IMR-90 (cell line): ENCODE measurements at regions of chr1 and their contacts with region 1.

Region 1: GRCh38 chr1:94237291-94238226 is at the start of gene ARHGAP29:
- DNase-seq: peak; percentile 50
- ATAC-seq: peak; percentile 96
- H3K4me3 ChIP-seq: peak within 1 kb of the TSS; percentile 60
- H3K27ac ChIP-seq: peak within 1 kb of the TSS; percentile 27
- H3K4me1 ChIP-seq: peaks cover 1% of the 10 kb centered on the region; the same call in 1 of the 2 replicates
- H3K27me3 ChIP-seq: no peaks in the 10 kb centered on the region; the same call in 1 of the 2 replicates
- CTCF ChIP-seq: no peak
- POLR2A ChIP-seq: no peak
- RAD21 ChIP-seq: no peak
- total RNA-seq, gene ARHGAP29: 30.3 and 45.3 TPM in 2 replicates

Region 2: GRCh38 chr1:94045465-94046056 is 192.0 kb before region 1 on chr1:
- CTCF ChIA-PET with region 1: interaction called, 3 read pairs
- POLR2A ChIA-PET with region 1: no interaction called
- dilution Hi-C with region 1: no loop called
- in situ Hi-C with region 1: no loop called
- intact Hi-C with region 1: loop called (anchors 5 kb)
- DNase-seq: peak; percentile 92
- ATAC-seq: peak; percentile 90
- H3K4me3 ChIP-seq: no peak overlapping the region
- H3K27ac ChIP-seq: peak overlapping the region; percentile 19
- H3K4me1 ChIP-seq: peaks cover 13% of the 10 kb centered on the region; the same call in 1 of the 2 replicates
- H3K27me3 ChIP-seq: no peaks in the 10 kb centered on the region
- CTCF ChIP-seq: peak; percentile 66
- POLR2A ChIP-seq: no peak
- RAD21 ChIP-seq: peak; percentile 49; the same call in 1 of the 2 replicates